ENCODE measurements at regions of chr16 and their contacts with region 1.

Region 1: GRCh38 chr16:508884-509736 is 18.4 kb upstream of the CAPN15 start:
- DNase-seq: no peak
- ATAC-seq: no peak
- H3K4me3 ChIP-seq: no peak overlapping the region
- H3K27ac ChIP-seq: no peak overlapping the region
- H3K4me1 ChIP-seq: no peaks in the 10 kb centered on the region
- H3K27me3 ChIP-seq: no peaks in the 10 kb centered on the region
- CTCF ChIP-seq: no peak

Region 2: GRCh38 chr16:386641-387156 is 122.4 kb before region 1 on chr16:
- CTCF ChIA-PET with region 1: interaction called, 3 read pairs
- POLR2A ChIA-PET with region 1: no interaction called
- in situ Hi-C with region 1: no loop called
- intact Hi-C with region 1: loop called (anchors 5 kb)
- DNase-seq: no peak
- ATAC-seq: no peak
- H3K4me3 ChIP-seq: no peak overlapping the region
- H3K27ac ChIP-seq: peak overlapping the region; percentile 80
- H3K4me1 ChIP-seq: peaks cover 43% of the 10 kb centered on the region
- H3K27me3 ChIP-seq: no peaks in the 10 kb centered on the region
- CTCF ChIP-seq: peak; percentile 29; the same call in 1 of the 2 replicates

Measured in Panc1 (cell line).